ENCODE measurements at regions of chr12 and their contacts with region 1.

Region 1: DNA sequence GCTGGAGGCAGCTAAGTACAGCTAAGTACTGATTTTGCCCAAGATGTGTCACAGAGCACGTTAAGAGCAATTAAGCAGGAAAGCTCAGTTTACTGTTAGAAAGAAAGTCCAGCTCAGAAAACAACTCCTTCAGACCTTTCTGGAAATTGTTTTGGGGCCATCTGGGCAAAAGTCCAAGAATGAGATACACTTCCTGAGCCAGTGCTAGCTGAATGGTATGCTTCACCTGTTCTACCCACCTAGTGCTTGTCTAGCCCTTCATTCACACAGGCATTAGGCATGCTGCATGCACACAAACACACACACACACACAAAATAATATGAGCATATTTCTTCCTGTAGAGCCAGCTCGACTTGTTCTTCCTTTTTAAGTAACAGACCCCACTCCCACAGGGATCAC is 6.6 kb upstream of the IKZF4 start:
- DNase-seq: no peak
- ATAC-seq: no peak
- H3K4me3 Mint-ChIP-seq: no peak overlapping the region
- H3K27ac Mint-ChIP-seq: no peak overlapping the region
- H3K4me1 Mint-ChIP-seq: peaks cover 12% of the 10 kb centered on the region
- H3K27me3 Mint-ChIP-seq: no peaks in the 10 kb centered on the region

Region 2: GRCh38 chr12:55797068-55797467 is 217.1 kb before region 1 on chr12:
- CTCF ChIA-PET with region 1: no interaction called
- POLR2A ChIA-PET with region 1: no interaction called
- intact Hi-C with region 1: no loop called
- DNase-seq: peak; percentile 20
- ATAC-seq: no peak
- H3K4me3 Mint-ChIP-seq: no peak overlapping the region
- H3K27ac Mint-ChIP-seq: no peak overlapping the region
- H3K4me1 Mint-ChIP-seq: peaks cover 8% of the 10 kb centered on the region
- H3K27me3 Mint-ChIP-seq: no peaks in the 10 kb centered on the region

Region 3: DNA sequence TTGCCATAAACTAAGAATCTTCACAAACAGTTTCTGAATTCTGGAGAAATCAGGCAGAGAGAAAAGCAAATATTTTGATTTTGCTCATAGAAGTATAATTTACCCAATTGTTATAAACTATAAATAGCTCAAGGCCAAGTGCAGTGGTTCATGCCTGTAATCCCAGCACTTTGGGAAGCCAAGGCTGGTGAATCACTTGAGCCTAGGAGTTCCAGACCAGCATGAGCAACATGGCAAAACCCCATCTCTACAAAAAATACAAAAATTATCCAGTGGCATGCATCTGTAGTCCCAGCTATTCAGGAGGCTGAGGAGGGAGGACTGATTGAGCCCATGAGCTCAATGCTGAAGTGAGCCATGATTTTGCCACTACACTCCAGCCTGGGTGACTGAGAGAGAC is 151.9 kb before region 1 on chr12:
- CTCF ChIA-PET with region 1: no interaction called
- POLR2A ChIA-PET with region 1: no interaction called
- intact Hi-C with region 1: no loop called
- DNase-seq: no peak
- ATAC-seq: no peak
- H3K4me3 Mint-ChIP-seq: no peak overlapping the region
- H3K27ac Mint-ChIP-seq: no peak overlapping the region
- H3K4me1 Mint-ChIP-seq: no peaks in the 10 kb centered on the region
- H3K27me3 Mint-ChIP-seq: no peaks in the 10 kb centered on the region

Region 4: GRCh38 chr12:56029666-56030293 is 15.6 kb after region 1 on chr12:
- CTCF ChIA-PET with region 1: interaction called, 32 read pairs
- POLR2A ChIA-PET with region 1: no interaction called
- intact Hi-C with region 1: no loop called
- DNase-seq: peak; percentile 63
- ATAC-seq: peak; percentile 60
- H3K4me3 Mint-ChIP-seq: no peak overlapping the region
- H3K27ac Mint-ChIP-seq: no peak overlapping the region
- H3K4me1 Mint-ChIP-seq: peaks cover 29% of the 10 kb centered on the region
- H3K27me3 Mint-ChIP-seq: no peaks in the 10 kb centered on the region